GM12878 (cell line): ENCODE measurements at regions of chr3 and their contacts with region 1.

Region 1: DNA sequence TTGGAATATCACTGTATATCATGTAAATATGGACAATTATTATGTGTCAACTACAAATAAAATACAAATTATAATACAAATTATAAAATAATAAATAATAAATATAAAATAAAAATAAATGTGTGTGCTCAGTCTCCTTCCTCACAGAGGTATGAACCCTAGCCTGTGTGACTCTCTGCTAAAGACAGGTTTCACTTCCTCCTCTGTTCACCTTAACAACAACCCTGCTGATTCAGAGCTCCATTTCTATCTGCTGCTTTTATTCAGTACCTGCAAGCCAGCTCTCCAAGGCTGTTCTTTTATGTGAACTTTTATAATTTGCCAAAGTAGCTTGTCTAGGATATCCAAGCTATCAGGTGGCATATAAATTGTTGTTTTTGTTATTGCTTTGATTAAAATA is 610.7 kb upstream of the GRM7 start:
- DNase-seq: no peak
- ATAC-seq: peak; percentile 100
- H3K4me3 ChIP-seq: no peak overlapping the region
- H3K27ac ChIP-seq: 0 out of 2 replicates have a peak overlapping the region, but pooled peaks have one; percentile 24
- H3K4me1 ChIP-seq: peaks cover 3% of the 10 kb centered on the region; the same call in 1 of the 2 replicates
- H3K27me3 ChIP-seq: no peaks in the 10 kb centered on the region
- CTCF ChIP-seq: no peak
- EP300 ChIP-seq: 0 out of 4 replicates have a peak, but pooled peaks of 1 of the 2 experiments have one; percentile 32
- POLR2A ChIP-seq: no peak
- RAD21 ChIP-seq: 0 out of 2 replicates have a peak, but pooled peaks have one; percentile 9

Region 2: DNA sequence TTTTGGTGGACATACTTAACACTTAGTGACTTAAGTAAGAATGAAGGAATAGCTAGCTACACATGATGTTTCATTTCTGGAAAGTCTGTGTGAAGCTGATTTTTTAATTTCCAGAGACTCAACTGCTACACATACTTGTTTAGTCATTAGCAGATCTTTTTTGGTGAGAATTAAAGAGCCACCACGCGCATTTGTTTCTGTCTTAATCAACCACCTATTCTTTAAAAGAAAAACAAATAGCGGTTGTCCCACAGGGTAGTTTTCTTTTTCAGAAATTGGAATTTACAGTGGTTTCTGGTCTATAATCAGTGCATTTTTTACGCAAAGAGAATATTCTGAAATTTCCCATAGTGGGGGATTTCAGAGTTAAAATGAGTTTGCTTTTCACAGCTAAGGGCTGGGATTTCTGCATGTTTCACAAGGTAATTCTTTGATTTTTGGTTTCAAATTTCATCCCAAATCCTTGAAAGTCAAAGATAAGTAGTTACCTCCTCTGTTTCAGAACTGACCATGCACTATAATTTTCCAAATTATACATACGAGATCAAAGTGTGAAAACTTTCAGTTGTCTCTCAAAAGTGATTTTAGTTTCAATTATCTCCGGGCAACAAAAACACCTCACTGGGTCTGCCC is 20.3 kb before region 1 on chr3:
- CTCF ChIA-PET with region 1: interaction called, 3 read pairs
- POLR2A ChIA-PET with region 1: interaction called, 11 read pairs
- RAD21 ChIA-PET with region 1: interaction called, 21 read pairs
- SMC1A ChIA-PET with region 1: interaction called, 11 read pairs
- in situ Hi-C with region 1: no loop called
- intact Hi-C with region 1: no loop called
- DNase-seq: peak; percentile 70
- ATAC-seq: peak; percentile 83
- H3K4me3 ChIP-seq: no peak overlapping the region
- H3K27ac ChIP-seq: peak overlapping the region; percentile 68
- H3K4me1 ChIP-seq: peaks cover 3% of the 10 kb centered on the region; the same call in 1 of the 2 replicates
- H3K27me3 ChIP-seq: no peaks in the 10 kb centered on the region
- CTCF ChIP-seq: no peak
- EP300 ChIP-seq: peak in 1 of 2 experiments; percentile 70; a peak in 1 of 4 replicates
- POLR2A ChIP-seq: no peak
- RAD21 ChIP-seq: no peak

Region 3: GRCh38 chr3:6260551-6261191 is 10.5 kb after region 1 on chr3:
- CTCF ChIA-PET with region 1: interaction called, 5 read pairs
- POLR2A ChIA-PET with region 1: interaction called, 3 read pairs
- RAD21 ChIA-PET with region 1: interaction called, 20 read pairs
- SMC1A ChIA-PET with region 1: interaction called, 36 read pairs
- in situ Hi-C with region 1: no loop called
- intact Hi-C with region 1: no loop called
- DNase-seq: peak; percentile 40
- ATAC-seq: peak; percentile 94
- H3K4me3 ChIP-seq: no peak overlapping the region
- H3K27ac ChIP-seq: peak overlapping the region; percentile 46; the same call in 1 of the 2 replicates
- H3K4me1 ChIP-seq: no peaks in the 10 kb centered on the region
- H3K27me3 ChIP-seq: no peaks in the 10 kb centered on the region
- CTCF ChIP-seq: no peak
- EP300 ChIP-seq: no peak
- POLR2A ChIP-seq: no peak
- RAD21 ChIP-seq: no peak